Activated CD8-positive, alpha-beta memory T cell treated with anti-CD3 and anti-CD28 coated beads, Interleukin-2, amount 10 ng/mL, durations not matched to agents 7 days and 5 days (primary cell): ENCODE measurements at regions of chr3 and their contacts with region 1.

Region 1: DNA sequence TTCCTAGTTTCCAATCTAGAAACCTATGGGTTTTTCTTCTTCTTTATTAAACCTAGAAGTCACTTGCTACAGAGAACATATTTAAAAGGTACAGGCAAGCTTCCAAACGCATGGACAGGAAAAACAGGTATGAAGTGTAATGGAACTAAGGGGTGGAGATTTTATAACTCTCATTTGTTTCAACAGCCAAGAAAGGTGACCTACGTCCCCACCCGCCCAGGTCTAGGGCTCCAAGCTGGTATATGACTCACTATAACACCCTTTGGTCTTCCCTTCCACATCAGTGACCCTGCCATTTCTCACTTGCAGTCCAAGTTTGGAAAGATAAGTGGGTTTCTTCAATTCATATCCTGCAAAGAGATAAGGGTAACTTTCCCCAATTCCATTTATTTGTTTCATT is 6.0 kb upstream of the LIPH start:
- DNase-seq: no peak
- ATAC-seq: no peak
- H3K4me3 Mint-ChIP-seq: no peak overlapping the region
- H3K27ac Mint-ChIP-seq: no peak overlapping the region
- H3K4me1 Mint-ChIP-seq: peaks cover 9% of the 10 kb centered on the region
- H3K27me3 Mint-ChIP-seq: peaks cover 4% of the 10 kb centered on the region

Region 2: GRCh38 chr3:185572183-185572582 is 13.8 kb after region 1 on chr3:
- CTCF ChIA-PET with region 1: interaction called, 25 read pairs
- DNase-seq: no peak
- ATAC-seq: no peak
- H3K4me3 Mint-ChIP-seq: no peak overlapping the region
- H3K27ac Mint-ChIP-seq: no peak overlapping the region
- H3K4me1 Mint-ChIP-seq: peaks cover 1% of the 10 kb centered on the region
- H3K27me3 Mint-ChIP-seq: no peaks in the 10 kb centered on the region

Region 3: GRCh38 chr3:185585859-185586685 is 27.7 kb after region 1 on chr3 and contains the start of gene SENP2:
- CTCF ChIA-PET with region 1: interaction called, 10 read pairs
- DNase-seq: peak; percentile 100
- ATAC-seq: peak; percentile 97
- H3K4me3 Mint-ChIP-seq: peak within 1 kb of the TSS; percentile 89
- H3K27ac Mint-ChIP-seq: peak within 1 kb of the TSS; percentile 95
- H3K4me1 Mint-ChIP-seq: peaks cover 36% of the 10 kb centered on the region
- H3K27me3 Mint-ChIP-seq: no peaks in the 10 kb centered on the region
- total RNA-seq, gene SENP2: 28.8 to 31.4 TPM